H1 (cell line): ENCODE measurements at regions of chr1 and their contacts with region 1.

Region 1: DNA sequence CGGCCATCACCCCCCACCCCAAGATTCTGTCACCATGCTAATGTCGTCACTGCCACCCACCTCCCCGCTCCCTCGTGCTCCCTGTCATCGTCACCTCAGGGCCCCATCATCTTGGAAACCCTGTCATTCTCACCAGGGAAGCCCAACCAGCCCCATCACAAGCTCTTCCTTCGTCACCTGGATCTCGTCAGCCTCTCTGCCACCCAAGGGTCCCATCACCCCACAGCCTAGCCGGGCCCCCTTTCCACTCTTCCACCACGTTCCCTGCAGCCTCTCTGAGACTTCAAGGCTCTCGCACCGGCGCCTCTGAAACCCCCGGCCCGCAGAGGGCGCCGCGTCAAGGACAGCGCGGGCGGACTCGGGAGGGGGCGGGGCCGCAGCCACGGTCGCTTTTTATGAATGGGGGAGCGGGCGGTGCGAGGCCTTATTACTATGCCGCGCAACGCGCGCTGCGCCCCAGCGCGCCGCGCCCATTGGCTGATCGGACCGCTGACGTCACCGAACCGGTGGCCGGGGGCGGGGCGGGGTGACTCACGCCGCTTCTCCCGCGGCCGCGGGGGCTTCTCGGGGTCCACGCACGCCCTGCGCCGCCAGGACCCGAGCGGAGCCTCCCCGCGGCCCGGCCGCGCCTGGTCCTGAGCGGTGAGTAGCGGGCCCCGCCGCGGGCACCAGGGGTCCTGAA is at the start of gene GPR3:
- DNase-seq: peak; percentile 82 to 97
- H3K4me3 ChIP-seq: peak within 1 kb of the TSS; percentile 61 to 82 (median 70)
- H3K27ac ChIP-seq: peak within 1 kb of the TSS; percentile 45; the same call in 1 of the 2 replicates
- H3K4me1 ChIP-seq: peaks cover 2 to 19% (median 12%) of the 10 kb centered on the region in 4 experiments
- H3K27me3 ChIP-seq: no peaks in the 10 kb centered on the region
- CTCF ChIP-seq: peak in 2 of 3 experiments; percentile 55 to 60; a peak in 3 of 4 replicates
- EP300 ChIP-seq: no peak
- POLR2A ChIP-seq: no peak
- RAD21 ChIP-seq: peak; percentile 16 to 36; a peak in 3 of 4 replicates
- total RNA-seq, gene GPR3: 9.4 and 9.9 TPM in 2 replicates

Region 2: DNA sequence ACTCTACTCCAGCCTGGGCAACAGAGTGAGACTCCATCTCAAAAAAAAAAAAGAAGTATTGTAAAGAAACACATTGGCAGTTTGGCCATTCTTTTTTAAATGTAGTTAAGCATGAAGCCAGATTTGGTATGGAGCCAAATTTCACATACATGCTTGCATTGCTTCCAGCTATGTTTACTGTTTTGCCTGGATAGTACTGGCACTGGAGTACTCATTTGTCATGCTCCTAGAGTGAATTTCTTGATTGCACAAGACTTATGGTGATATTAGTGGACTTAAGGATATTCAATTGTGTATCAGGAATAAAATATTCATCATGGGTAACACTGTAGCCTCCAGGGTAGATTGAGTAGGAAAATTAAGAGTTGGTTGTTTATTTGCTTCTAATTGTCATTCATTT is 212.9 kb before region 1 on chr1:
- CTCF ChIA-PET with region 1: no interaction called
- POLR2A ChIA-PET with region 1: no interaction called
- DNase-seq: no peak
- H3K4me3 ChIP-seq: no peak overlapping the region
- H3K27ac ChIP-seq: no peak overlapping the region
- H3K4me1 ChIP-seq: no peaks in the 10 kb centered on the region
- H3K27me3 ChIP-seq: no peaks in the 10 kb centered on the region
- CTCF ChIP-seq: no peak
- EP300 ChIP-seq: no peak
- POLR2A ChIP-seq: no peak
- RAD21 ChIP-seq: no peak

Region 3: GRCh38 chr1:27269276-27269675 is 123.0 kb before region 1 on chr1:
- CTCF ChIA-PET with region 1: no interaction called
- POLR2A ChIA-PET with region 1: no interaction called
- DNase-seq: no peak
- H3K4me3 ChIP-seq: no peak overlapping the region
- H3K27ac ChIP-seq: no peak overlapping the region
- H3K4me1 ChIP-seq: no peaks in the 10 kb centered on the region
- H3K27me3 ChIP-seq: no peaks in the 10 kb centered on the region
- CTCF ChIP-seq: no peak
- EP300 ChIP-seq: no peak
- POLR2A ChIP-seq: no peak
- RAD21 ChIP-seq: no peak

Region 4: GRCh38 chr1:27306892-27307761 is 85.1 kb before region 1 on chr1:
- CTCF ChIA-PET with region 1: interaction called, 300 read pairs
- POLR2A ChIA-PET with region 1: interaction called, 11 read pairs
- DNase-seq: peak in 1 of 2 experiments; percentile 76
- H3K4me3 ChIP-seq: peak overlapping the region in 2 of 4 experiments; percentile 23 to 39; a peak in 4 of 8 replicates
- H3K27ac ChIP-seq: peak overlapping the region; percentile 57; the same call in 1 of the 2 replicates
- H3K4me1 ChIP-seq: peaks cover 11 to 15% (median 13%) of the 10 kb centered on the region in 4 experiments
- H3K27me3 ChIP-seq: no peaks in the 10 kb centered on the region
- CTCF ChIP-seq: peak; percentile 33 to 57 (median 41)
- EP300 ChIP-seq: no peak
- POLR2A ChIP-seq: 0 out of 3 replicates have a peak, but pooled peaks of 1 of the 2 experiments have one; percentile 28
- RAD21 ChIP-seq: 0 out of 4 replicates have a peak, but pooled peaks of 1 of the 2 experiments have one; percentile 12

Region 5: GRCh38 chr1:27349784-27350662 is 42.2 kb before region 1 on chr1:
- CTCF ChIA-PET with region 1: interaction called, 625 read pairs
- POLR2A ChIA-PET with region 1: interaction called, 5 read pairs
- DNase-seq: peak in 1 of 2 experiments; percentile 83
- H3K4me3 ChIP-seq: peak overlapping the region; percentile 47 to 63 (median 51)
- H3K27ac ChIP-seq: no peak overlapping the region
- H3K4me1 ChIP-seq: peaks cover 0 to 20% (median 8%) of the 10 kb centered on the region in 4 experiments; a peak in 6 of 7 replicates
- H3K27me3 ChIP-seq: peaks cover 0 to 8% (median 6%) of the 10 kb centered on the region in 4 experiments; a peak in 5 of 7 replicates
- CTCF ChIP-seq: no peak
- EP300 ChIP-seq: no peak; a peak in 1 of 3 replicates
- POLR2A ChIP-seq: 0 out of 3 replicates have a peak, but pooled peaks of 1 of the 2 experiments have one; percentile 24
- RAD21 ChIP-seq: no peak

Region 6: DNA sequence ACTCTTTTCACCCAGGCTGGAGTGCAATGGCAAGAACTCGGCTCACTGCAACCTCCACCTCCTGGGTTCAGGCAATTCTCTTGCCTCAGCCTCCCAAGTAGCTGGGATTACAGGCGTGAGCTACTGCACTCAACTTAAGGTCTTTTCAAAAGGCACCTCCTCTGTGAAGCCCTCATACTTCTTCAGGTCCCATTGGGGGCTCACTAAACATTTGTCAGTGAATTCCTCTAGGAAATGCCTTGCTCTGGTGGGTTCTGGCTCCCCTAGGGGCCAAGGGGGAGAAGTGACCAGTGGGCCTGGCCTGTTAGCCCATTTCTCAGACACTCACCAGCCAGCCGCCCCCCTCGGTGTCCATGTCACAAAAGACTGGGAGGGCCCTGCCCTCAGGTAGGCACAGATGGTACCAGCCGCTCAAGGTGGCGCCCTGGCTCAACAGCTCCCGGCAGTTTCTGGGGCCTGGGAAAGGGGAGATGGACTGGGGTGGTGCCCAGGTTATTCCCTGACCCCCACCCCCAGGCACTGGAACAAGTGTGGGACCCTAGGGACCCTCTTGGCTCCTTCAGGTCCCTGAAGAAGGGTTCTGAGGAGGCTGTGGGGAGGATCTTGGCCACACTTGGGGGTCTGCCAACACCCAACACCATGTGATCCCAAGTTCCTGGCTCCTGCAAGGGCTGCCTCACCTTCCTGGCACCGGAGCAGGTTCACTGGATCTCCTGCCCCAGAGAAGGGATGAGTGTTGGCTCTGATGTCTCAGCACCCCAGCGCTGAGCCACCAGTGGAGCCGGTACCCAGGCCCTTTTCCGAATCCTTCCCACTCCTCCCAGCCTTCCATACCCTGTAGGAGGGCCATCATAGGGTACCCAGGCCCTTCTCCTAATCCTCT is 19.2 kb before region 1 on chr1:
- CTCF ChIA-PET with region 1: interaction called, 625 read pairs
- POLR2A ChIA-PET with region 1: interaction called, 5 read pairs
- DNase-seq: peak in 1 of 2 experiments; percentile 64
- H3K4me3 ChIP-seq: no peak overlapping the region
- H3K27ac ChIP-seq: no peak overlapping the region
- H3K4me1 ChIP-seq: peaks cover 0 to 3% (median 0%) of the 10 kb centered on the region in 4 experiments; a peak in 1 of 7 replicates
- H3K27me3 ChIP-seq: no peaks in the 10 kb centered on the region
- CTCF ChIP-seq: peak; percentile 61 to 69 (median 63)
- EP300 ChIP-seq: no peak
- POLR2A ChIP-seq: no peak
- RAD21 ChIP-seq: peak; percentile 41 to 57; a peak in 3 of 4 replicates

Region 7: DNA sequence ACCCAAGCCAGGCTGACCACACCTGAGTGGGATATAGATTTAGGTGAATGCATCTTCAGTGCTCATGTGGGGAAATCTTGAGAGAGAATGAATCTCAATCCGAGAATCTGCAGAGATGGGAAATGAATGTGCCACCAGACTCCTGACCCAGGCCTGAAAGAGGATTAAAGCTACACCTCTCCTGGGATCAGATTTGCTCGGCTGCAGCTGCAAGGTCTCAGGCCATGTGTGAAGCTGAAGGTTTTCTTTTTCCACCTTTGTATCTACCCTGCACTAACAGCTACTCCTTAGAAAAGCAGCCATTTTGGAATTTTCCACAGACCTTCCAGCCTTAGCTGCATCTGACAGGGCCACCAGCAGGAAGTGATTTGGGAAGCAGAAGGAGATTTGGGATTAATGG is 18.5 kb after region 1 on chr1:
- CTCF ChIA-PET with region 1: interaction called, 119 read pairs
- POLR2A ChIA-PET with region 1: interaction called, 4 read pairs
- DNase-seq: no peak
- H3K4me3 ChIP-seq: no peak overlapping the region
- H3K27ac ChIP-seq: no peak overlapping the region
- H3K4me1 ChIP-seq: peaks cover 0 to 6% (median 3%) of the 10 kb centered on the region in 4 experiments; a peak in 3 of 7 replicates
- H3K27me3 ChIP-seq: no peaks in the 10 kb centered on the region
- CTCF ChIP-seq: no peak
- EP300 ChIP-seq: no peak
- POLR2A ChIP-seq: no peak
- RAD21 ChIP-seq: no peak

Region 8: DNA sequence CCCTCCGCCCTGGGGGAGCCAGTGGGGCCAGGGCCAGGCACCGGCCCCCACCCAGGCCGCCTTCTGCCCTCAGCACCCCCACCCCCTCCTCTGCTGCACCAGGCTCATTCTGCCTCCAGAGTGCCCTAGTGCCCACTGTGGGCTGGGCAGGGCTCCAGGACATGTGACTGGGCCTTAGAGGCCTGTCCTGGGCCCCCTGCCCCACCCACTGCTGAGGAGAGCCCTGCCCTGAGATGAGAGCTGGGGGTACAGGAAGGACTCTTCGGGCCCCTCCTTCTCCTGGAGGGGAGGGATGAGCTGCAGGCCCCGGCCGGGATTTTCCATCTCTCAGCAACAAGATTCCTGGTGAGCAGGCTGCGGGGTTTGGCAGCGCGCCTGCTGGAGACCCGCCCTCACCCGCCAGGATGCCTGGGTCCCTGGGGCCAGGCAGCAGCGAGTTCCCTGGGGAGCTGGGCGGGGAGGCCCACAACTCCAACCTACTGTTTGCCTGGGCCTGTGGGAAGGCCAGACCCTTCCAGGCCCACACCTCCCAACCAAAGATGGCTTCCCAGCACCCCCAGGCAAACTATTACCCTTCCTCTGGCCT is 197.7 kb after region 1 on chr1:
- CTCF ChIA-PET with region 1: interaction called, 12 read pairs
- POLR2A ChIA-PET with region 1: no interaction called
- DNase-seq: no peak
- H3K4me3 ChIP-seq: no peak overlapping the region
- H3K27ac ChIP-seq: no peak overlapping the region
- H3K4me1 ChIP-seq: peaks cover 7 to 45% (median 33%) of the 10 kb centered on the region in 4 experiments
- H3K27me3 ChIP-seq: peaks cover 0 to 2% (median 0%) of the 10 kb centered on the region in 4 experiments; a peak in 1 of 7 replicates
- CTCF ChIP-seq: no peak
- EP300 ChIP-seq: no peak
- POLR2A ChIP-seq: no peak
- RAD21 ChIP-seq: no peak